ENCODE measurements at regions of chr19 and their contacts with region 1.

Region 1: GRCh38 chr19:49340069-49340864 is 5.1 kb downstream of the CD37 start:
- DNase-seq: peak in 1 of 2 experiments; percentile 75
- H3K4me3 ChIP-seq: peak overlapping the region in 2 of 4 experiments; percentile 32 to 56; a peak in 4 of 8 replicates
- H3K27ac ChIP-seq: no peak overlapping the region
- H3K4me1 ChIP-seq: peaks cover 0 to 17% (median 10%) of the 10 kb centered on the region in 4 experiments; a peak in 6 of 7 replicates
- H3K27me3 ChIP-seq: peaks cover 0 to 10% (median 3%) of the 10 kb centered on the region in 4 experiments; a peak in 4 of 7 replicates
- CTCF ChIP-seq: no peak
- EP300 ChIP-seq: no peak
- POLR2A ChIP-seq: no peak
- RAD21 ChIP-seq: no peak

Region 2: DNA sequence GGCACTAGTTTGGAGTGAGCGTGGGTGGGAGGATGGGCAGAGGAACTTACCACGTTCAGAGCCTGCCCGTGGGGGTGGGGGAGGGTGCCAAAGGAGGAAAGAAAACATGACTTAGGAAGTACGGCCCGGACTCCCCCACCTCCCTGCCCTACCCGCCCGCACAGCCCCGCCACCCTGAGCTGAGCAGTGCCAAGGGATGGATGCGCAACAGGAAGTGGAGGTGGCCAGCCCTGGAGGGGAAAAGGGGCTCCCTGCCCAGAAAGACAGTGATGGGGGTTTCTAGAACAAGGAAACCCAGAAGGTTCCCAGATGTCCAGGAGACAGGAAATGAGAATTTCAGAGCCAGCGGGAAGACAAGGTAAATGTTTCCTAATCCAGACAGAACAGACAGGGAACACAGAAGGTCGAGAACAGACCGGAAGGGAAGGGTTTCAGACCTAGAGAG is 15.7 kb after region 1 on chr19:
- CTCF ChIA-PET with region 1: interaction called, 5 read pairs
- POLR2A ChIA-PET with region 1: interaction called, 112 read pairs
- DNase-seq: no peak
- H3K4me3 ChIP-seq: no peak overlapping the region
- H3K27ac ChIP-seq: no peak overlapping the region
- H3K4me1 ChIP-seq: peaks cover 0 to 6% (median 3%) of the 10 kb centered on the region in 4 experiments; a peak in 4 of 7 replicates
- H3K27me3 ChIP-seq: no peaks in the 10 kb centered on the region
- CTCF ChIP-seq: no peak
- EP300 ChIP-seq: no peak
- POLR2A ChIP-seq: no peak
- RAD21 ChIP-seq: no peak

Region 3: GRCh38 chr19:49363268-49364082 is 23.2 kb after region 1 on chr19 and contains the start of gene DKKL1:
- CTCF ChIA-PET with region 1: interaction called, 5 read pairs
- POLR2A ChIA-PET with region 1: interaction called, 112 read pairs
- DNase-seq: peak; percentile 100
- H3K4me3 ChIP-seq: peak within 1 kb of the TSS; percentile 92 to 95 (median 93)
- H3K27ac ChIP-seq: 0 out of 2 replicates have a peak within 1 kb of the TSS, but pooled peaks have one; percentile 31
- H3K4me1 ChIP-seq: peaks cover 0 to 16% (median 9%) of the 10 kb centered on the region in 4 experiments; a peak in 5 of 7 replicates
- H3K27me3 ChIP-seq: no peaks in the 10 kb centered on the region
- CTCF ChIP-seq: peak in 2 of 3 experiments; percentile 14 to 55; a peak in 2 of 4 replicates
- EP300 ChIP-seq: no peak
- POLR2A ChIP-seq: peak in 1 of 2 experiments; percentile 29; a peak in 1 of 3 replicates
- RAD21 ChIP-seq: peak; percentile 49 to 53; a peak in 3 of 4 replicates
- total RNA-seq, gene DKKL1: 2.6 and 3.1 TPM in 2 replicates